A673 (cell line): ENCODE measurements at regions of chr17 and their contacts with region 1.

Region 1: DNA sequence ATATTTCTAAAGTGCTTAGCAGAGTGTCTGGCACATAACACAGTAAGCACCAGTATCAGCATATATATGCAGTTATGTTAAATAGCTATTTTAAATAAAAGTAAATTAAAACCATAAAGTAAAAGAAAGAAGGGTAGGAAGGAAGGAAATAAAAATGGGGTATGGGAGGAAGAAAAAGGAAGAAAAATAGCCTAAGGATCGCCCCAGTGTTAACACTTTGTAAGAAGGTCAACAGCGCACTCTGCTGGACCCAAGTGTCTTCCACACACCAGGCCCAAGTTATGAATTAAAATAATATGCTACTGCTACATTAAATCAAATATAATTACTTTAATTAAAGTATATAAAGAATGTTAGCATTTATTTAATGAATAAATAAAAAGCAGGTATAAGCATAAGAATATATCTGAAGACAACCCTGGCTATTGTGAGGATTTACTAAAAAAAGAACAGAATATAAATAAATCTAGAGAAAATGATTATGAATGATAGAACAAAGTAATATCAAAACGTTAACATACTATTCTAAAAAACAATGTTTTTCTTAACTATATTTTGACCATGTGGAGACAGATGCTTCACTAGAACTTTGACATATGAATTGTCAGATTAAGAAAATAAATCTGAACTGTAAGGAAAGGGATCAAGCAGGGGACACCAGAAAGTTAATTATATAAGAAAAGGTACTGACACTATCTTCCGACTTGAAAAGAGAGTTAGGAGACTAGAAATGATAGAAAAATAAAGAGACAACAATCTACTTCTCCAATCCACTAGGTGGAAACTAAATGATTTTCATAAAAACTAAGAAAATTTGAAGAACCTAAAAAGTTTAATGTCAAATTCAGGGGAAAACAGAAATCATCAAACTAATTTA is 25.9 kb downstream of the BRIP1 start:
- DNase-seq: peak; percentile 76
- H3K4me3 ChIP-seq: no peak overlapping the region
- H3K27ac ChIP-seq: no peak overlapping the region
- H3K4me1 ChIP-seq: no peaks in the 10 kb centered on the region
- H3K27me3 ChIP-seq: no peaks in the 10 kb centered on the region
- CTCF ChIP-seq: peak; percentile 87

Region 2: DNA sequence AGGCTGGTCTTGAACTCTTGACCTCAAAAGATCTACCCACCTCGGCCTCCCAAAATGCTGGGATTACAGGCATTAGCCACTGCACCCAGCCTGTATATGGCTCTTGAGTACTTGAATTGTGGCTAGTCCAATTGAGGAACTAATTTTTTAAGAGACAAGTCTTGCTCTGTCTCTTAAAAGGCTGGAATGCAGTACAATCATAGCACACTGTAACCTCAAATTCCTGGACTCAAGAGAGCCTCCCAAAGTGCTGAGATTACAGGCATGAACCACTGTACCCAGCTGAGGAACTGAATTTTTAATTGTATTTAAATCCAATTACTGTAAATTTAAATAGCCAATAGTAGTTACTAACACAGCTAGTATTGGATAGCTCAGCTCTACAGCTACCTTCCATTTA is 177.1 kb after region 1 on chr17:
- CTCF ChIA-PET with region 1: no interaction called
- POLR2A ChIA-PET with region 1: no interaction called
- intact Hi-C with region 1: no loop called
- DNase-seq: peak; percentile 7
- H3K4me3 ChIP-seq: no peak overlapping the region
- H3K27ac ChIP-seq: no peak overlapping the region
- H3K4me1 ChIP-seq: no peaks in the 10 kb centered on the region
- H3K27me3 ChIP-seq: no peaks in the 10 kb centered on the region
- CTCF ChIP-seq: no peak

Region 3: DNA sequence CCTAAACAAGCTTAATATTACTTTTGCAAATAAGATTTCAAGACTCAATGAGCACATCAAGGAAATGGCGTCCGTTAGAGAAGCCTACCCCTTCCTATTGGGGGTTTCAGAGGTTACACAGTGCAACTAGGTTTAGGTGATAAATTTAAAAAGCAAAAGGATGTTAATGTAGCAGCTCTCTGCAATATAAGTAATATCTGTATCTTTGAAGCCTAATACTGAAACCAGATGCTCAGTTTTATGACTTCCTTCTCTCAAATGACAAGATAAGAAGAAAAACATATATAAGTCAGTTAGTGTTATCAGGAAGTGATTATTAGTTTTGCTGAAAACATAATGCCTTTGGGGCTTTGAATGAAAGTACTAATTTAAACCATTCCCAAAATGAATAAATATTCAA is 282.0 kb after region 1 on chr17:
- CTCF ChIA-PET with region 1: no interaction called
- POLR2A ChIA-PET with region 1: interaction called, 10 read pairs
- intact Hi-C with region 1: no loop called
- DNase-seq: peak; percentile 50
- H3K4me3 ChIP-seq: no peak overlapping the region
- H3K27ac ChIP-seq: peak overlapping the region; percentile 12
- H3K4me1 ChIP-seq: peaks cover 13% of the 10 kb centered on the region
- H3K27me3 ChIP-seq: no peaks in the 10 kb centered on the region
- CTCF ChIP-seq: no peak

Region 4: DNA sequence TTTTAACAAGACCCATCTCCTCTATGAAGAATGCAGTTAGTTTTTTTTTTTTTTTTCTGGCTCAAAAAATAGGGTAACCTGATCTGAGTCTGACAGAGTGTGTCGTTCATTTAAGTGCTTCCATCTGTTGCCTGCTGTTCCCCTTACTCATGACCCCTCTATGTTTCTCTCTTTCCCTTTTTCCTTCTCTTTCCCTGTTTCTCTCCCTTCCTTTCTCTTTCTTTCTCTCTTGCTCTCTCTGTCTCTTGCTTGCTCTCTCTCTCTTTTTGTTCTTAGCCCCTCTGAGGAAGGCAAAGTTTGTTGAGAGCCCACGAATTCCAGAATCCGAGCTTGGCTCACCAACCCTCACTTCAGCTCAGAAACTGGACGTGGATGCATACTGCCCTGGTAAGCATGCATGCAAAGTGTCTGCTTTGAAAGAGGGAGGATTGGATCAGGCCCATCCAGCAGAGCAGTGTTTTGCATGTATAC is 1313.6 kb after region 1 on chr17:
- CTCF ChIA-PET with region 1: no interaction called
- POLR2A ChIA-PET with region 1: no interaction called
- intact Hi-C with region 1: no loop called
- DNase-seq: peak; percentile 13
- H3K4me3 ChIP-seq: no peak overlapping the region
- H3K27ac ChIP-seq: no peak overlapping the region
- H3K4me1 ChIP-seq: peaks cover 3% of the 10 kb centered on the region
- H3K27me3 ChIP-seq: no peaks in the 10 kb centered on the region
- CTCF ChIP-seq: no peak